ENCODE measurements at regions of chr2 and their contacts with region 1.

Region 1: DNA sequence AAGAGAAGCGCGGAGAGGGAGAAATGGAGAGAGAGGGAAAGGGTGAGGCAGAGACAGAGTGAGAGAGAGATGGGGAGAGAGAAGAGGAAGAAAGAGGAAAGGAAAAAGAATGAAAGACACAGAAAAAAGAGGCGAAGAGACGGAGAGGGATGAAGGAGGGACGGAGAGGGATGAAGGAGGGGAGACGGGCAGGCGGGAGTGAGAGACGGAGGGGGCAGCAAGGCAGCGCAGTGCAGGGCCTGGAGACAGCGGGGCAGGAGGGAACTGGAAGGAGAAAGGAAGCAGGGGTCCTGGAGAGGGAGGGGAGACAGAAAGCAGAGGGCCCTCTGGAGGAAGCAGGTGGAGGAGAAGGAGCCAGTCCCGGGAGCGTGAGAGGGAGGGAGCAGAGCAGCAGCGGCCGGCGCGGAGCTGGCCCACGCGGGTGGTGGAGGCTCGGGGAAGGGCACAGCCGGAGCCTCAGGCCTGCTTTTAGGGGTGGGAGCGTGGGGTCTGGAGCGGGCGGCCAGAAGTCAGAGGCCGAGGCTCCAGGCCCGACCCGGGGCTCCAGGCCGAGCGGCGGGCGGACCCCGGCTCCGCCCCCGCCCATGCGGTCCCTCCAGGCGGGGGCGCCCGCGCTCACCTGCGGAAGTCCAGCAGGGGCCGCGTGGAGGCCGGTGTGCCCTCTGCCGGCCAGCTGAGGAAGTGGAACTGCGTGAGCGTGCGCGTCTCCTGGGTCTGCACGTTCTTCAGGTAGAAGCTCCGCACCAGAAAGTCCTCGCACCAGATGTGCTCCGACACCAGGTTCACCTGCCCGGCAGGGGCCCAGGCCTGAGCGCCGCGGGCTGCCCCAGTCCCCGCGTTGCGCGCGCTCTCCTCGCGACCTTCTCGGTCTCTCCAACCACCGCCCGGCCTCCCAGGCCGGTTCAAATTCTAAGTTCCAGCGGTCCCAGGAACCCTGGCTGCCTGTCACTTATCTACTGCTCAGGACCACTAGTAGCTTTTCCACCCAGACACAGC is 14.5 kb downstream of the PTPRN start:
- DNase-seq: peak; percentile 65 to 91
- H3K4me3 ChIP-seq: peak overlapping the region; percentile 61; the same call in 1 of the 2 replicates
- H3K27ac ChIP-seq: no peak overlapping the region
- H3K4me1 ChIP-seq: peaks cover 7% of the 10 kb centered on the region
- H3K27me3 ChIP-seq: peaks cover 7% of the 10 kb centered on the region
- CTCF ChIP-seq: peak; percentile 87

Region 2: GRCh38 chr2:219171231-219171651 is 123.4 kb before region 1 on chr2:
- CTCF ChIA-PET with region 1: interaction called, 10 read pairs
- POLR2A ChIA-PET with region 1: no interaction called
- intact Hi-C with region 1: loop called (anchors 1 kb)
- DNase-seq: peak in 1 of 2 experiments; percentile 36
- H3K4me3 ChIP-seq: no peak overlapping the region
- H3K27ac ChIP-seq: no peak overlapping the region
- H3K4me1 ChIP-seq: peaks cover 11% of the 10 kb centered on the region
- H3K27me3 ChIP-seq: no peaks in the 10 kb centered on the region
- CTCF ChIP-seq: peak; percentile 82

Region 3: DNA sequence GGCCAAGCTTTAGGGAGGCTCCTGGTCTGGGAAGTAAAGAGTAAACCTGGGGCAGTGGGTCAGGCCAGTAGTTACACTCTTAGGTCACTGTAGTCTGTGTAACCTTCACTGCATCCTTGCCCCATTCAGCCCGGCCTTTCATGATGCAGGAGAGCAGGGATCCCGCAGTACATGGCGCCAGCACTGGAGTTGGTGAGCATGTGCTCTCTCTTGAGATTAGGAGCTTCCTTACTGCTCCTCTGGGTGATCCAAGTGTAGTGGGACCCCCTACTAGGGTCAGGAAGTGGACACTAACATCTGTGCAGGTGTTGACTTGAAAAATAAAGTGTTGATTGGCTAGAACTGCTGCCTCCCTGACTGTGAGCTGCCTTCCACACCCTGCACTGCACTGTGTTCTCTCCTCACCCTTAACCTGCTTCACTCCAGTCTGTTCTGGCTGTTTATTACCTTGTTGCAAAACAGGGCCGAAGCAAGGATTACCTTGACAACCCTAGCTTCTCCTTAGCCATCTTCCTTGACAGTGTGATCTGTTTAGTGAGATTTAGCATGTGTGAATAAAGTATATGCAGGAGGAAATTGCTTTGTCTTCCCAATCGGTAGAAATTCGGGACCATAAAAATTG is 111.4 kb before region 1 on chr2:
- CTCF ChIA-PET with region 1: no interaction called
- POLR2A ChIA-PET with region 1: no interaction called
- intact Hi-C with region 1: no loop called
- DNase-seq: no peak
- H3K4me3 ChIP-seq: no peak overlapping the region
- H3K27ac ChIP-seq: no peak overlapping the region
- H3K4me1 ChIP-seq: peaks cover 9% of the 10 kb centered on the region
- H3K27me3 ChIP-seq: no peaks in the 10 kb centered on the region
- CTCF ChIP-seq: no peak

Region 4: GRCh38 chr2:219218732-219219701 is 75.6 kb before region 1 on chr2 and contains the start of gene ABCB6:
- CTCF ChIA-PET with region 1: interaction called, 5 read pairs
- POLR2A ChIA-PET with region 1: no interaction called
- intact Hi-C with region 1: loop called (anchors 1 kb)
- DNase-seq: peak; percentile 67 to 91
- H3K4me3 ChIP-seq: peak within 1 kb of the TSS; percentile 64
- H3K27ac ChIP-seq: peak within 1 kb of the TSS; percentile 90
- H3K4me1 ChIP-seq: peaks cover 13% of the 10 kb centered on the region
- H3K27me3 ChIP-seq: no peaks in the 10 kb centered on the region
- CTCF ChIP-seq: no peak
- total RNA-seq, gene ABCB6: 33.7 and 41.4 TPM in 2 replicates

Region 5: GRCh38 chr2:219253753-219254590 is 40.7 kb before region 1 on chr2 and contains the start of gene TUBA4A:
- CTCF ChIA-PET with region 1: interaction called, 13 read pairs
- POLR2A ChIA-PET with region 1: interaction called, 7 read pairs
- intact Hi-C with region 1: loop called (anchors 1 kb)
- DNase-seq: peak; percentile 65 to 87
- H3K4me3 ChIP-seq: peak within 1 kb of the TSS; percentile 87
- H3K27ac ChIP-seq: peak within 1 kb of the TSS; percentile 43
- H3K4me1 ChIP-seq: peaks cover 46% of the 10 kb centered on the region
- H3K27me3 ChIP-seq: no peaks in the 10 kb centered on the region
- CTCF ChIP-seq: no peak
- total RNA-seq, gene TUBA4A: 118 and 157 TPM in 2 replicates

Region 6: DNA sequence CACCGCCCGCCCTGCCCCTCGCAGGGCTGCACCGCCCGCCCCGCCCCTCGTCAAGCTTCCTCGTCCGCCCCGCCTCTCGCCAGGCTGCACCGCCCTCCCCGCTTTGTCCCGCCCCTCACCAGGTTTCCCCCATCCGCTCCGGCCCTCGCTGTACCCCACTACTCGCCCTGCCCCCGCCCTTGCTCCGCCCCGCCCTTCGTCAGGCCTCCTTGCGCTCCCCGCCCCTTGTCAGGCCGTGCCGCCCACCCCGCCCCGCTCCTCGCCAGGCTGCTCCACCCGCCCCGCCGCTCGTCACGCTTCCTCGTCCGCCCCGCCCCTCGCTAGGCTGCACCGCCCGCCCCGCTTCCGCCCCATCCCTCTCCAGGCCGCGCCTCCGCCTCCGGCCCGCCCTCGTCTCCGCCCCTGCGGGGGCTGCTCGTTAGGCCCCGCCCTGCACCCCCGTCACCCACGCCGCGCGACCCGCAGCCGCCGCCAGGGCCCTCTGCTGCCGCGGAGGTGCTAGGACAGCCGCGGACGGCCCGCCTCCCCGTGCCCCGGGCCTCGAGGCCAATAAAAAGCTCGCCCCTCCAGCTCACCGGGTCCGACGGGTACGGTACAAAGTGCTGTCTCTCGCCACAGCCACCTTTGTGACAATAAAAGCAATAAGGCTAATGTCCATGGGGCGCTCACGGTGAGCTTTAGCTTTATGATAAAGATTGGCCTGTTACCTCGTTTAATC is 93.6 kb after region 1 on chr2:
- CTCF ChIA-PET with region 1: interaction called, 7 read pairs
- POLR2A ChIA-PET with region 1: no interaction called
- intact Hi-C with region 1: loop called (anchors 5 kb)
- DNase-seq: peak; percentile 71 to 98
- H3K4me3 ChIP-seq: peak overlapping the region; percentile 53
- H3K27ac ChIP-seq: peak overlapping the region; percentile 30
- H3K4me1 ChIP-seq: peaks cover 6% of the 10 kb centered on the region; the same call in 1 of the 2 replicates
- H3K27me3 ChIP-seq: no peaks in the 10 kb centered on the region
- CTCF ChIP-seq: peak; percentile 60

Region 7: GRCh38 chr2:219530048-219530963 is 235.7 kb after region 1 on chr2:
- CTCF ChIA-PET with region 1: no interaction called
- POLR2A ChIA-PET with region 1: no interaction called
- intact Hi-C with region 1: loop called (anchors 5 kb)
- DNase-seq: peak; percentile 54 to 84
- H3K4me3 ChIP-seq: no peak overlapping the region
- H3K27ac ChIP-seq: no peak overlapping the region
- H3K4me1 ChIP-seq: no peaks in the 10 kb centered on the region
- H3K27me3 ChIP-seq: peaks cover 33% of the 10 kb centered on the region
- CTCF ChIP-seq: peak; percentile 95